Activated CD4-positive, alpha-beta T cell treated with anti-CD3 and anti-CD28 coated beads for 36 hours (primary cell): ENCODE measurements at regions of chr19 and their contacts with region 1.

Region 1: DNA sequence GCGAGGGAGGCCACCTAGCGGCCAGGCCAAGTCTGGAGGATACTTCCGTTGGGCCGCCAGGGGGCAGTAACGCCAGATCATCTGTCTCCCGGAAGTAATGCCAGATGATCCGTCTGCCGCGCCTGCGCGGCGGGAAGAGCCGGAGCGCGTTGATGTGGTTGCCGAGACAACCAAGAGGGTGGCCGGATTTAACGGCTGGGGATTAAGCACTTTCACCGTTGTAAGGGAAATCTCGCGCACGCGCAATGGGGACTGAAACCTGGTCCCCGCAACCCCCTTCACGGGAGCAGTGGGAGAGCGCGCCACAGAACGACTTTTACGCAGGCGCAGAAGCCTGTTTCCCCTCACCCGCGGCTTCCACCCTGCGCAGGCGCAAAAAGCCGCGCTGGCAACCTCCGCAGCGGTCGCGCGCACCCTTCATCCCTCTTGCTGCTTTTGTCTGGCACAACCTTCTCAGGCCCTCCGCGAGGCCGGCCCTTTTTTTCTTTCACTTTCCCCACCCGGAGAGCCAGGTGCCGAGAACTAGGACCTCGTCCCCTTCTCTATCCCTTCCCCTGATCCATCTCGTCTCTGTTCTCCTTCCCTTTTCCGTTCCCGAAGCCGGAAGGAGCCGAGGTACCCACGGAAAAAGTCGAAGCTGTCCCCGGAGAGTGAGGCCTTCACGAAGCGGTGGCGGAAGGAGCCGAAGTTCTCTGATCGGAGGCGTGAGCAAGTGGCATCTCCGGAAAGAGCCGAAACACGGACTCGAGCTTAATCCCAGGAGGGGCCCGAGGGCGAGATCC is 886 bp upstream of the U2AF2 start:
- DNase-seq: peak; percentile 99
- ATAC-seq: peak; percentile 84
- H3K4me3 Mint-ChIP-seq: peak overlapping the region; percentile 86
- H3K27ac Mint-ChIP-seq: peak overlapping the region; percentile 98
- H3K4me1 Mint-ChIP-seq: peaks cover 37% of the 10 kb centered on the region
- H3K27me3 Mint-ChIP-seq: no peaks in the 10 kb centered on the region

Region 2: DNA sequence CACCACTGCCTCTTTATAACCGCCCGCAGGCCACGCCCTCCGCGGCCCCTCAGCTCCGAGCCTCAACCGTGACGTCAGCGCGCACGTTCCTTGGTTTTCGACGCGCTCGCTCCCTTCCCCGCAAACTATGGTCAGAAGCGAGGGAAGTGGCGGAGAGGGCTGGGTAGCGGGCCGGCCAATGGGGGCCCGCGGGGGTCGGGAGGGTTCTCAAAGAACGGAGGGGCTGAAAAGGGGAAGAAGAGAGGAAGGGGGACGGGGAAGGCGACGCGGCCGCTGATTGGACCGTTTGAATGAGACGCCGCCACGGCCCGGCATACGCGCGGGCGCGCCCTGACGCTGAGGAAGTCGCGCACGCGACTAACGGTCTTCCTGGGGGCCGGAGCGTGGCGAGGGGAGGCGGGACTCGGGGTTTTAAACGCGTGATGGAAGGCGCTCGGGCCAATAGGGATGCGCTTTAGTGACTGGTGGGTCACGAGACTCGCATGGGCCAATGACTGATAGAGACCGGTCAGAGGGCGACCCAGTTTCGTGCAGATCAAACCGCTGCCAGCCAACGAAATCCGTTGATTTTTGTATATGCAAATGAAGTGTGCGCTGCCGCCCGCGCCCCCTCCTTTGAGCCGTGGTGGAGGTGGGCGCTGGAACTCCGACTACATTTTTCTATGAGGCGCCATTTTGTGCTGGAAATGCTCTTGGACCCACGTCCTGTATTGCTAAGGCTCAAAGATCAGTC is 246.0 kb before region 1 on chr19:
- CTCF ChIA-PET with region 1: no interaction called
- POLR2A ChIA-PET with region 1: no interaction called
- intact Hi-C with region 1: loop called in 1 of 2 experiments (anchors 1 kb)
- DNase-seq: peak; percentile 98
- ATAC-seq: peak; percentile 96
- H3K4me3 Mint-ChIP-seq: peak overlapping the region; percentile 90
- H3K27ac Mint-ChIP-seq: peak overlapping the region; percentile 96
- H3K4me1 Mint-ChIP-seq: peaks cover 22% of the 10 kb centered on the region
- H3K27me3 Mint-ChIP-seq: no peaks in the 10 kb centered on the region

Region 3: GRCh38 chr19:55643348-55644176 is 10.4 kb before region 1 on chr19 and contains the start of gene ZNF581:
- CTCF ChIA-PET with region 1: interaction called, 24 read pairs
- POLR2A ChIA-PET with region 1: interaction called, 7 read pairs
- intact Hi-C with region 1: loop called (anchors 1 kb)
- DNase-seq: peak; percentile 91
- ATAC-seq: peak; percentile 55
- H3K4me3 Mint-ChIP-seq: peak within 1 kb of the TSS; percentile 93
- H3K27ac Mint-ChIP-seq: peak within 1 kb of the TSS; percentile 99
- H3K4me1 Mint-ChIP-seq: peaks cover 44% of the 10 kb centered on the region
- H3K27me3 Mint-ChIP-seq: no peaks in the 10 kb centered on the region
- total RNA-seq, gene ZNF581: 18.9 to 26.9 TPM

Region 4: GRCh38 chr19:56121180-56122167 is 467.5 kb after region 1 on chr19 and contains the start of gene ZNF787:
- CTCF ChIA-PET with region 1: interaction called, 6 read pairs
- POLR2A ChIA-PET with region 1: interaction called, 3 read pairs
- intact Hi-C with region 1: loop called in 1 of 2 experiments (anchors 1 kb)
- DNase-seq: peak; percentile 98
- ATAC-seq: peak; percentile 92
- H3K4me3 Mint-ChIP-seq: peak within 1 kb of the TSS; percentile 82
- H3K27ac Mint-ChIP-seq: peak within 1 kb of the TSS; percentile 91
- H3K4me1 Mint-ChIP-seq: peaks cover 48% of the 10 kb centered on the region
- H3K27me3 Mint-ChIP-seq: no peaks in the 10 kb centered on the region
- total RNA-seq, gene ZNF787: 27.6 to 28.4 TPM

Region 5: GRCh38 chr19:56140583-56141416 is 486.9 kb after region 1 on chr19 and contains the start of gene ZNF444:
- CTCF ChIA-PET with region 1: no interaction called
- POLR2A ChIA-PET with region 1: no interaction called
- intact Hi-C with region 1: loop called in 1 of 2 experiments (anchors 1 kb)
- DNase-seq: peak; percentile 99
- ATAC-seq: peak; percentile 90
- H3K4me3 Mint-ChIP-seq: peak within 1 kb of the TSS; percentile 89
- H3K27ac Mint-ChIP-seq: peak within 1 kb of the TSS; percentile 94
- H3K4me1 Mint-ChIP-seq: peaks cover 31% of the 10 kb centered on the region
- H3K27me3 Mint-ChIP-seq: no peaks in the 10 kb centered on the region
- total RNA-seq, gene ZNF444: 29.2 to 32.2 TPM